Activated CD4-positive, alpha-beta memory T cell treated with anti-CD3 and anti-CD28 coated beads for 36 hours (primary cell): ENCODE measurements at regions of chr2 and their contacts with region 1.

Region 1: DNA sequence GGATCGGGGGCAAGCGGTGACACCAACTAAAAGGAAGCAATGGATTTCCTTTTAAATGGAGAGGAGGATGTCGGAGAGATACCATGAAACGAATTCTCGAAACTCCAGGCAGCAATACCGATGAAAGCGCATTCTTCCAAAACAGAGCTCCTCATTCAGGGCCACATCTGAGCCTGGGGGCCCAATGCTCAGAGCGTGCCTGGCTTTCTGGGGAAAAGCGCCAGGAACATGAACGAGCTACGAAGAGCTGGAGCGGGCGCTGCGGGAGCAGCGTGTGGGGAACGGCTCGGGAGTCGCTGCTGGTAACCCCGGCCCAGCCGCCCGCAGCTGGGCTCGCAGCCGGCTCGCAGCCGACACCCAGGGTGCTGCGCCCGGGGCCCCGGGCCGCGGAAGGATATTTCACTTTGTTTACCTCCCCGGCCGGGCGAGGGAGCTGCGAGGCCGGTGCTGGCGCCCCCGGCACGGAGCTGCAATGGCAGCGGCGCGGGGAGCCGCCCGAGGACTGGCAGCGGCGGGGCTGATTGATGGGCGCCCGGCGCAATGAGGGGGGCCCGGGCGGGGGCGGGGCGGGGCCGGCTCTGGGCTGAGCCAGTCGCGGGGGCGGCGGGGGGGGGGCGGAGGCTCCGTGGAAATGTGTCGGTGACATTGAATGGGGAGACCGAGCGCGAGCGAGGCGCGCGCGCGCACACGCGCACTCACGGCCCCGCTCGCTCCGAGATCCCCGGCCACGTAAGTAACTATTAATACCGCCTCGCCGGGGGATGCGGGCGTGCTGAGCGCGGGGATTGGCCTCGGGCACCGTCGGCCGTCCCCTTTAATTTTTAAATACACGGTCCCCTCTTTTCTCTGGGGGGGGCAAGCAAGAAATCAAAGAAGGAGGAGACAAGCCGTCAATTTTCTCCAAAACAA is at the start of gene TRIB2:
- DNase-seq: peak; percentile 89
- H3K4me3 Mint-ChIP-seq: peak within 1 kb of the TSS; percentile 86
- H3K27ac Mint-ChIP-seq: peak within 1 kb of the TSS; percentile 86
- H3K4me1 Mint-ChIP-seq: peaks cover 44% of the 10 kb centered on the region
- H3K27me3 Mint-ChIP-seq: no peaks in the 10 kb centered on the region
- total RNA-seq, gene TRIB2: 4.9 to 5.3 TPM

Region 2: GRCh38 chr2:11437602-11438001 is 1278.9 kb before region 1 on chr2:
- CTCF ChIA-PET with region 1: no interaction called
- POLR2A ChIA-PET with region 1: no interaction called
- intact Hi-C with region 1: no loop called
- DNase-seq: no peak
- H3K4me3 Mint-ChIP-seq: no peak overlapping the region
- H3K27ac Mint-ChIP-seq: no peak overlapping the region
- H3K4me1 Mint-ChIP-seq: no peaks in the 10 kb centered on the region
- H3K27me3 Mint-ChIP-seq: no peaks in the 10 kb centered on the region

Region 3: DNA sequence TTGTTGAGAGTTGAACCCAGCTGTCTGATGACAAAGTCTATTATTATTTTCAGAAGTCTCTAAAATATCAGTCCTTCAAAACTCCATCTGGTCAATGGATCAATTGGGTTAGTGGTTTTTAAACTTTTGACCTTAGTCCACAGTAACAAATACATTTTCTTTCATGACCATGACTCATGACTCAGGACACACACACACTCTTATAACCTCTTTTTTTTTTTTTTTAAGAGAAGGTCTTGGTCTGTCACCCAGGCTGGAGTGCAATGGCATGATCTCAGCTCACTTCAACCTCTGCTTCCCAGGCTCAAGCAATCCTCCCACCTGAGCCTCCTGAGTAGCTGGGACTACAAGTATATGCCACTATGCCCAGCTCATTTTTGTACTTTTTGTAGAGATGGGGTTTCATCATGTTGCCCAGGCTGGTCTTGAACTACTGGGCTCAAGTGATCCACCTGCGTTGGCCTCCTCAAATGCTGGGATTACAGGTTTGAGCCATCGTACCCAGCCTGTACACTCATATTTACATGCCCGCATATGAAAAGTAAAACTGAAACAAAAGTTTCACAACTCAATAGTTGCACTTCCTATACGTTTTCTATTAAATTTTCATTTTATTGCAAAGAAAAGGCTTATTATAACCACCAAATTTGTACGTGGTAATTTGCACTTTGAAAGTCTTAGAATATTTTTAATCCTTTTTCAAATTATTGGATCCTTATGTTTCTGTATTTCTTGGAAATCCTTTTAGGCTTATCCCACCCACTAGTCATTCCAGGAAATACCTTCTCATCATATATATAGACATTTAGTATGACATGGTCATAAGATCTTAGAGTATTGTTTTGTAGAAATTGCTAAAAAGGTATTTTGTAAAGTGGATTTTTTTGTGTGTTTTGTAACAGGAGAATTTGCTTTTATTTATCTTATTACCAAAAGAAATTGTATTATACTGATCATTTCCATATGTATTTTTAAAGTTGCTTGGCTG is 771.1 kb before region 1 on chr2:
- CTCF ChIA-PET with region 1: no interaction called
- POLR2A ChIA-PET with region 1: no interaction called
- intact Hi-C with region 1: loop called (anchors 1 kb)
- DNase-seq: peak; percentile 54
- H3K4me3 Mint-ChIP-seq: no peak overlapping the region
- H3K27ac Mint-ChIP-seq: no peak overlapping the region
- H3K4me1 Mint-ChIP-seq: peaks cover 12% of the 10 kb centered on the region
- H3K27me3 Mint-ChIP-seq: no peaks in the 10 kb centered on the region

Region 4: DNA sequence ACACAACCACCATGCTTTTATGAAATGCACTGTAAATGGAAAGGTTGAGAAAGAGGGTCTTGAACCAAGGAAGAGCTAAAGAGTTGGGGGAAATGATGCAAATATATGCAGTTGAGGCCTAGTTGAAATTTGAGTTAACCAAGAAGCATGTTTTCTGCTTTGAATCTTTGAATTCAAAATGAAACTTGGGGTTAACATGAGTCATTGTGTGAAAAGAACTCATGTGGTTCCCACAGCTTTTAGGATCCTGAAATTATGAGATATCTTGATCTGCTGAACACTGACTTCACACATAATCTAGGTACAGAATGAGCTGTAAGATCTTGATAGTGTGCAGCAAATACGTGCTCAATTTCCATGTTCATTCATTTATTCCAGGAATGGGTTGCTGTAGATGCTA is 422.7 kb before region 1 on chr2:
- CTCF ChIA-PET with region 1: interaction called, 5 read pairs
- POLR2A ChIA-PET with region 1: interaction called, 4 read pairs
- intact Hi-C with region 1: loop called (anchors 2 kb)
- DNase-seq: no peak
- H3K4me3 Mint-ChIP-seq: no peak overlapping the region
- H3K27ac Mint-ChIP-seq: no peak overlapping the region
- H3K4me1 Mint-ChIP-seq: peaks cover 43% of the 10 kb centered on the region
- H3K27me3 Mint-ChIP-seq: peaks cover 20% of the 10 kb centered on the region

Region 5: DNA sequence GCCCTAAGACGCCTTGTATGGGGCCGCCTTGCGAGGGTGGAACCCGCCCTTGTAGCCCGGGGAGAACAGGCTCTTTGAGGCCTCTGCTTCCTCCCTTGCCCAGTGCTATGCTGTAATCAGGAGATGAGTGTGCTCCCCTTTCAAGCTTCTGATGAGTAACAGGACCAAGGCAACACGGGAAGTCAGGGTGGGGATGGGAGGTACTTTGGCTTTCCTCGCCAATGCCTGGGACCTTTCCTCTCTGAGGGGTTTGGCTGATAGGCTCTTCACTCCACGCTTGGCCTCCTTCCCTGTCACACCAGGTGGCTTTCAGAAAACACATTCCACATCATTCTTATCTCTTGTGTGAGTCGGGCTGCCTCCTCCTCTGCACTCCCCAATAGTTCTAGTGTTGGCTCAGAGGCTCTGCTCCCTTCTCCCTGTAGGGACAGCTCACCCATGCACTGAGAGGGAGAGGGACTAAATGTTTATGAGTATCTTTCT is 223.5 kb before region 1 on chr2:
- CTCF ChIA-PET with region 1: interaction called, 5 read pairs
- POLR2A ChIA-PET with region 1: interaction called, 6 read pairs
- intact Hi-C with region 1: loop called (anchors 2 kb)
- DNase-seq: peak; percentile 82
- H3K4me3 Mint-ChIP-seq: peak overlapping the region; percentile 3
- H3K27ac Mint-ChIP-seq: peak overlapping the region; percentile 86
- H3K4me1 Mint-ChIP-seq: peaks cover 69% of the 10 kb centered on the region
- H3K27me3 Mint-ChIP-seq: no peaks in the 10 kb centered on the region

Region 6: GRCh38 chr2:12702305-12703121 is 14.0 kb before region 1 on chr2:
- CTCF ChIA-PET with region 1: interaction called, 27 read pairs
- POLR2A ChIA-PET with region 1: interaction called, 4 read pairs
- intact Hi-C with region 1: no loop called
- DNase-seq: no peak
- H3K4me3 Mint-ChIP-seq: peak overlapping the region; percentile 21
- H3K27ac Mint-ChIP-seq: no peak overlapping the region
- H3K4me1 Mint-ChIP-seq: peaks cover 42% of the 10 kb centered on the region
- H3K27me3 Mint-ChIP-seq: peaks cover 3% of the 10 kb centered on the region

Region 7: GRCh38 chr2:12931186-12931844 is 214.8 kb after region 1 on chr2:
- CTCF ChIA-PET with region 1: interaction called, 48 read pairs
- POLR2A ChIA-PET with region 1: interaction called, 3 read pairs
- intact Hi-C with region 1: loop called (anchors 1 kb)
- DNase-seq: no peak
- H3K4me3 Mint-ChIP-seq: no peak overlapping the region
- H3K27ac Mint-ChIP-seq: no peak overlapping the region
- H3K4me1 Mint-ChIP-seq: peaks cover 17% of the 10 kb centered on the region
- H3K27me3 Mint-ChIP-seq: no peaks in the 10 kb centered on the region

Region 8: GRCh38 chr2:12960671-12961070 is 244.1 kb after region 1 on chr2:
- CTCF ChIA-PET with region 1: no interaction called
- POLR2A ChIA-PET with region 1: no interaction called
- intact Hi-C with region 1: no loop called
- DNase-seq: no peak
- H3K4me3 Mint-ChIP-seq: no peak overlapping the region
- H3K27ac Mint-ChIP-seq: no peak overlapping the region
- H3K4me1 Mint-ChIP-seq: peaks cover 12% of the 10 kb centered on the region
- H3K27me3 Mint-ChIP-seq: peaks cover 1% of the 10 kb centered on the region